T-cell (primary cell): ENCODE measurements at regions of chr6 and their contacts with region 1.

Region 1: GRCh38 chr6:137361701-137362100 is 132.5 kb downstream of the OLIG3 start:
- DNase-seq: no peak
- ATAC-seq: no peak
- H3K4me3 ChIP-seq: no peak overlapping the region
- H3K4me3 Mint-ChIP-seq: no peak overlapping the region
- H3K27ac ChIP-seq: no peak overlapping the region
- H3K27ac Mint-ChIP-seq: peak overlapping the region in 1 of 2 donors; percentile 3
- H3K4me1 ChIP-seq: peaks cover 12 to 14% of the 10 kb centered on the region in 2 experiments
- H3K4me1 Mint-ChIP-seq: peaks cover 22 to 30% (median 23%) of the 10 kb centered on the region in 3 donors
- H3K27me3 ChIP-seq: no peaks in the 10 kb centered on the region
- H3K27me3 Mint-ChIP-seq: peaks cover 0 to 4% of the 10 kb centered on the region in 2 donors

Region 2: DNA sequence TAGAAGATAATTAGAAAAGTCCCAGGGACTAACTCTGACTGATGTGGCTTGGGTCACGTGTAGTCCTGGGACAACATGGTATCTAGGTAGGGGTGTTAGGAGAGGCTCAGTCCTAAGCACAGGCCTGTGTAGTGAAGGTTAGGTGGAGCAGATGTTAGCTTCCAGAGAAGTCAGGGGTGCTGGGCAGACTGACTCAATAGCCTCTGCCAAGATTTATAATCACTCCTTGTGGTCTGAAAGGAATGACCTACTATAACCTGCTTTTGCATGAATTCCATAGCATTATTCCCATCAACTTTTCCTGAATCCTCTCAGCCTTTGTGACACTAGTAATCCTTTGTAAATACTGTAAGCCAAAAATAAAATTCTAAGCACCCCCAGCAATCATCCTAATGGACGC is 549.5 kb before region 1 on chr6:
- CTCF ChIA-PET with region 1: no interaction called
- POLR2A ChIA-PET with region 1: no interaction called
- DNase-seq: no peak
- ATAC-seq: no peak
- H3K4me3 ChIP-seq: no peak overlapping the region
- H3K4me3 Mint-ChIP-seq: no peak overlapping the region
- H3K27ac ChIP-seq: no peak overlapping the region
- H3K27ac Mint-ChIP-seq: no peak overlapping the region
- H3K4me1 ChIP-seq: no peaks in the 10 kb centered on the region
- H3K4me1 Mint-ChIP-seq: peaks cover 0 to 8% (median 4%) of the 10 kb centered on the region in 3 donors
- H3K27me3 ChIP-seq: no peaks in the 10 kb centered on the region
- H3K27me3 Mint-ChIP-seq: peaks cover 2% of the 10 kb centered on the region in 2 donors

Region 3: DNA sequence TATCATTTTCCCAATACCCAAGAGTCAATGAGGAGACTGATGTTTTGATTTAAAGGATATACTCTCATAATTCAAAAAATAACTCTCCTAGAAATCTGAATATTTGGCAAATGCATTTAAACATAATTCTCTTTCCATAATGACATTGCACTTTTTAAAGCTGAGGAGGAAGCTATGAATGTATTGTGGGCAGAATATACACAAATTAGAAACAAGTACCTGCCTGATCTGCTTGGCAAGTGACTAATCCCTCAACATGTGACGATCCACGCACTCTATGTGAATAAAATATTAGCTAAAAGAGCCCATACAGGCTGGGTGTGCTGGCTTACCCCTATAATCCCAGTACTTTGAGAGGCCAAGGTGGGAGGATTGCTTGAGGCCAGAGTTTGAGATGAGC is 1323.6 kb after region 1 on chr6:
- CTCF ChIA-PET with region 1: no interaction called
- POLR2A ChIA-PET with region 1: interaction called in 1 of 2 experiments, 10 read pairs
- DNase-seq: no peak
- ATAC-seq: no peak
- H3K4me3 ChIP-seq: no peak overlapping the region
- H3K4me3 Mint-ChIP-seq: no peak overlapping the region
- H3K27ac ChIP-seq: no peak overlapping the region
- H3K27ac Mint-ChIP-seq: no peak overlapping the region
- H3K4me1 ChIP-seq: no peaks in the 10 kb centered on the region
- H3K4me1 Mint-ChIP-seq: no peaks in the 10 kb centered on the region
- H3K27me3 ChIP-seq: peaks cover 0 to 11% of the 10 kb centered on the region in 2 experiments
- H3K27me3 Mint-ChIP-seq: peaks cover 0 to 2% of the 10 kb centered on the region in 2 donors